ENCODE measurements at regions of chr16 and their contacts with region 1.

Region 1: DNA sequence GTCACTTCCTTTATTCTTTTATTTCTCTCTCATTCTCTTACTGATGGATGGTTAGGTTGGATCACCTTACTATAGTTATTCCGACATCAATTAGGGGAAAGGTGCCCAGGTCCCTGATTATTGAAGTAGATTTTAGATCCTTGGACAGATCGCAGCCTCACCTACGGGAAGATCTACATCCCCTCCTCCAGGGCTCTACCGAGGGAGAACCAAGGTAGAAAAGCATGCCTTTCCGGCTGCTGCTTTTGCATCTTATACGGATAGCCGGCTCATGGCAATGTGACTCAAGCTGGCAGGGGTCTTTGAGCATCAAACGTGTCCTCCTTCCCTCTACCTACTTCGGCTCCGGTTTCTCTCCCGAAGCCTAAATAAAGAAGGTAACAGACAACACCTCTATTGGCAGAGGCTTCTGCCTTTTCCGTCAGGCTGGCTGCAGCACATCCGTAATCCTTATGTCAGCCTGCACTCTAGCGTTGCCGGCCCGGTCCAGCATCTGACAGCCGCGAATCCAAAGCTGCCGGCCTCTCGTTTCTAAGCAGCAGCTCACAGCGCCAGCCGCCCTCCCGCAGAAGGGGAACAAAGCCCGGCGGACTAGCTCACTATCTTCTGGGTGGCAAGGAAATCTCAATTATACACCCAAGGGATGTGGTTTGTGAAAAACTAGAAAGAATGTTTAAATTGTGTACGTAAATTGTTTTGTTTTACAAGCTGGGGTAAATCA is 46.9 kb downstream of the IRX6 start:
- DNase-seq: peak; percentile 82
- ATAC-seq: peak; percentile 83

Region 2: DNA sequence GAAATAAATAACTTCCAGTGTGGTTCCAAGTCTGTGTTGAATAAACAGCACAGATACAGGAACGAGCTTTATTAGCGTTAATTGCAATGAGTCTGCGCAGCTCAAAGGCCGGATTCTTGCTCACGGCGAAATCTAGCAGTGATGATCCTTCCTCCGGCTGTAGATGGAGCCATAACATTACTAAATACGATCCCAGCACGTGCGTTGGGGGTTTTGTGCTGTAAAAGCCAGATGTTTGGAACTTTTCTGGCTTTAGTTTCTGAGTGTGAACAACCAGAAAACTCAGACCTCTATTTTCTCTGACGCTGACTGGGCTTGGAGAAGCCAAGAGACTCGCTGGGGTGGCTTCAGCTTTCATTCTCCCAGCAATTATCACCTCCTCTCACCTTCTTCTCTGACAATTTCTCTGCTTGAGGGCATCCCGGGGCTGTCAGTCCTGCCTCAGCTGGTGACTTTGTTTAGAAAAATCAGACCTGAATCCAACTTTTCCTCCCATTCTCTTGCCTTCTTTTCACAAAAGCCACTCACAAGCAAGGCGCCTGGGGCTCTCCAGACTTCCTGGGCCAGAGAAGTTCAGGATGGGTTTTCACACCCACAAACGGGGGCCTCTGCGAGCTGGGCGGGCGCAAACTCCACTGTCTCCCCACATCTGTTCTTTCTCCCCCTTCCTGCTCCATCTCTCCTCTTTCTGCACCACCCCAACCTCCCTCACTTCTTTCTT is 1820.8 kb before region 1 on chr16:
- intact Hi-C with region 1: loop called (anchors 10 kb)
- DNase-seq: no peak
- ATAC-seq: peak; percentile 82

Region 3: DNA sequence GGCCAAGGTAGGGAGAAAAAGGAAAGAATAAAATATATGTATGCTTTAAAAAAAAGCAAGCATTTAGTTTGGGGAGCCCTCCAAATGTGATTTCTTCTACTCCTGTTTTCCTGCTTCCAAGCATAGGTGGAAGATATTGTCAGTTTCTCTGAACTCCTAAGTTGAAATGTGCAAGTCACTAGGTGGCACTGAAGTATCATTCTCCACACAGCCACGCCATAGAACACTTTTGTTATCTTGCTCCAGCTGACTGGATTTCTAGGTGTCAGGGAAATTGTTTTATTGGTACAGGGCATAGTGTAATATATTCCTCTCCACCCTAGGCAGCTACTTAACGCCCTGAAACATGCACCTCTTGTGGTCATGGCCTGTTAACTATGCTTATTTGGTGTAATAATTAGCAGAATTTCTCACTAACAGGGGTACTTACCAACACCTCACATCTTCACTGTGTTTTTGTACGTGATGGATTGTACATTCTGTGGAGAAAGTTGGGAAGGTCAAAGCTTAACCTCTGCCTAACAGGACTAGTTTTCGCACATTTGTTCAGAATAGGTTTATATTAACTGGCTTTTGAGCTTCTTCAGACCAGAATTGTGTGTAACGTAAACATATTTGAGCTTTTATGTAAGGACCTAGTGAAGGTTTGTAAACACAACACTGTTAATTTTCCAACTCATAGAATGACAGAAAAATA is 1597.6 kb before region 1 on chr16:
- intact Hi-C with region 1: loop called (anchors 10 kb)
- DNase-seq: no peak
- ATAC-seq: peak; percentile 76

Region 4: GRCh38 chr16:55323637-55324490 is 47.1 kb before region 1 on chr16 and contains the start of gene IRX6:
- intact Hi-C with region 1: loop called (anchors 5 kb)
- DNase-seq: peak; percentile 72
- ATAC-seq: peak; percentile 61
- total RNA-seq, gene IRX6: 0.57 TPM

Region 5: DNA sequence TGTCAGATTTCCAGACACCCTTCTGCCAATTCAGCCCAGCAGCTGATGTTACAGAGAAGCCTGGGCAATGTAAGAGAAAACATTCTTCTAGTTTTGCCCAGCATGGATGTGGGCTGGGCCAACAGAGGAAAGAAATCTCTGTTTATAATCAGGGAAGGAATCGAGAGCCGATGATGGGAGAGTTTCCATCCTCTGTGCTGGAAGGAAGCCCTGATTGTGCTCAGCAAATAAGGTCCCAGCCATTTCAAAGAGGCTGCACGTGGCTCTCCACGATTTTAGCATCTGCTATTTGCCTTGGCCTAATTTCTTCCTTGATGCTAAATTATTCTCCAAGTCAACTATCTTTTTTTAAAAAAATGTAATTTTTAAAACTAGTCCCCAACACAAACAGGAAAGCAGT is 23.1 kb after region 1 on chr16:
- intact Hi-C with region 1: no loop called
- DNase-seq: no peak
- ATAC-seq: no peak

Measured in Right ventricle myocardium inferior (tissue), 1 donor.